ENCODE measurements at regions of chr2 and their contacts with region 1.

Region 1: GRCh38 chr2:47569658-47570472 is 166.9 kb downstream of the MSH2 start:
- DNase-seq: no peak
- H3K4me3 ChIP-seq: no peak overlapping the region
- CTCF ChIP-seq: no peak
- POLR2A ChIP-seq: no peak

Region 2: DNA sequence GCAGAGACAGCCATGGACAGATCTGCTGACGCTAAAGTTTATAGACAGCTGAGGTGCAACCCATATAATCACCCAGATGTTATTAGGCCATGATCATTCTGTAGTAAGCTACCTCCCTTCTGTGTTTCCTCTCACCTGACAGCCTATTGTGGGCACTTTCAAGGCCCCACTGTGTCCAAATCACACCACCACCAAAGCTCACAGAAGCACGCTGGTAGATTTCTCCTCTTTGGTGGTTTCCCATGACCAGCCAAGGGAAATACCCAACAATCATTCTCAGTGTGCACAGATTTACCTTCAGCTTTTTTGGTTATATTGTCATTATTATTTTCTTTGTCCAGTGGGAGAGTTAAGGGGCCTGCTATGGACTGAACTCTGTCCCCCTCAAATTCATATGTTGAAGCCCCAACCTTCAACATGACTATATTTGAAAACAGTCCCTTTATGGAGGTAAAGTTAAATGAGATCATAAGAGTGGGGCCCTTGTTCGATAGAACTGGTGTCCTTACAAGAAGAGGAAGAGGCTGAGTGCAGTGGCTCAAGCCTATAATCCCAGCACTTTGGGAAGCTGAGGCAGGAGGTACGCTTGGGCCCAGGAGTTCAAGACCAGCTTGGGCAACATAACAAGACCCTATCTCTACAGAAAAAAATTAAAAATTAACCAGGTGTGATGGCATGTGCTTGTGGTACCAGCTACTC is 139.1 kb after region 1 on chr2:
- intact Hi-C with region 1: no loop called
- DNase-seq: peak in 1 of 2 donors; percentile 48
- H3K4me3 ChIP-seq: no peak overlapping the region
- CTCF ChIP-seq: no peak
- POLR2A ChIP-seq: no peak

Region 3: GRCh38 chr2:47867205-47867604 is 297.3 kb after region 1 on chr2:
- intact Hi-C with region 1: no loop called
- DNase-seq: peak in 1 of 2 donors; percentile 32
- H3K4me3 ChIP-seq: no peak overlapping the region
- CTCF ChIP-seq: no peak
- POLR2A ChIP-seq: no peak

Region 4: DNA sequence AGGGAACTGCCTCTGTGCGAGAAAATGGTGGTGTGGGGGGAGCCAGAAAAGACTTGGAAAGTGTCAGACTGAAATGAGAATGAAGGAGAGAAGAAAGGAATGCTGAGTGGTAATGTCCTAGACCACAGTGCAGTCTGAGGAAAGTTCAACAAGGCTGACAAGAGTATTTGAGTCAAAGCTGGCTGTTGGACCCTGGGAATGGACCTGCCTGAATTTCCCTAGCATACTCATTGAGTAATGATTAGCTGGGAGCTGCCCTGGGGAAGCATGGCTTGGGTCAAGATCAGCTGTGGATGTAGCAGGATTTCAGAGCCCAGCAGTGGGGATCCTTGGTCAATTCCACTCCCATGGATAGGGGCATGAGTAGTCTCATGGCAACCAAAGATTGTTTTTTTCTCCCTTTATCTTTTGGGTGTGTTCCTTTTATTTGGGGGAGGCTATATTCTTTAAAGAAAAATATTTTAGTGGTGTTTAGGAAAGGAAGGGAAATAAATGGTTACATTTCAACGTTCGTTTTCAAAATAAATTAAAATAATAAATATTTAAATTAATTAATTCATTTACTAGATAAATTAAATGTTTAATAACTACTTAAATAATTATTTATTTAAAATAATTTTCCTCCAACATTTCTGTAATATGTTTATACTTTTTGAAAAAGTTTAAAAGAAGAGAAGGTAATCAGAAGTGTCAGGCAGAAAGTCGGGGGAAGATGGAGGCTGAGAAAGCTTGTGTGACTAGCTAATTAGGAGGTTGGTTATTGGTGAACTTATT is 1201.6 kb after region 1 on chr2:
- intact Hi-C with region 1: loop called (anchors 5 kb)
- DNase-seq: no peak
- H3K4me3 ChIP-seq: no peak overlapping the region
- CTCF ChIP-seq: no peak
- POLR2A ChIP-seq: no peak

Measured in lower leg skin (tissue), 4 donors.